GM13976 (cell line): ENCODE measurements at regions of chr20 and their contacts with region 1.

Region 1: DNA sequence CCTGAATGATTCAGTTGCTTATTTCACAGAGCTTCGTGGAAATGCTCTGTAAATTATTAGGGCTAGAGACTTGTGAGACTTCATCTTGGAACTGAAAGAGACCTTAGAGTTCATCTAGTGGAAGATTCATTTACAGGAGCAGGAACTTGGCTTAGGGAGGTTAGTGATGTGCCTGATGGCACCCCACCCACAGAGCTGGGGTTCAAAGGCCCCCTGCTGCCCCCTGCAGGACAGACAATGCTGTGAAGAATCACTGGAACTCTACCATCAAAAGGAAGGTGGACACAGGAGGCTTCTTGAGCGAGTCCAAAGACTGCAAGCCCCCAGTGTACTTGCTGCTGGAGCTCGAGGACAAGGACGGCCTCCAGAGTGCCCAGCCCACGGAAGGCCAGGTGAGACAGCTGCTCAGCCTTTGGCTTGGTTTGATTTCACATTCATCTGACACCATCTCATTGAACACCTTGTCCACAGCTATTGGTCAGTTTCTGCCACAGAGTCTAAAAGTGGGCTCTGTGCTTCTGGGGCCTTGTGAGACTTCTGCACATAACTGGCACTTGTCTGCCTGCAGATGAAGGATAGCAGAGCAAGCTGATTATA is 25.1 kb downstream of the MYBL2 start:
- DNase-seq: peak; percentile 81
- CTCF ChIP-seq: peak; percentile 54

Region 2: DNA sequence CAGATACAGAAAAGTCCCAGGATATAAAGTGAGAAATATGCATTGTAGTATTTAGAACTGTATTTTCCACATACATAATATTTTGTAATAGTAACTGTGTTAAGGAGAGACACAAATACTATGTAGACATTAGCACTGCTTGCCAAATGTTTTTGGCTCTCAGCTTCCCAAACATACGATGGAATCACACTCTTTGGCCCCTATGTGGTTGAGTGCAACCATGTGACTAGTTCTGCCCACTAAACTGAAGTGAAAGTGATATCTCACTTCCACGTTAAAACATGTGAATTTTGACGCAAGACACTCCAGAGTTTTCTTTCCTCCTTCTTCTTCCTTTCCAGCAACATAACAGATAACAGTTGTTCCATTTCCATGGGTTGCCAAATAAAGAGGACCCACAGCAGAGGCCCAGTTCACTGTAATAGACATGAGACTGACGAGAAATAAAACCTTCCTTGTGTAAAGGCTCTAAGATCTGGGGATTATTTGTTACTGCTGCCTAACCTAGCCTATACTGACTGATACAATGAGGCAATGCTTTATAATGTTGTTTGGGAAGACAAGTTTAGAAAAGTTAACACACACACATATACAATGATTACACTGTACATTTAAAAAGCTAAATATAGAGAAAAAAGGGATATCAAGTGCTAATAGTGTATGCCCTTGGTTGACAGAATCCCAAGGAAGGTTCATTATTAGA is 599.5 kb before region 1 on chr20:
- in situ Hi-C with region 1: no loop called
- DNase-seq: no peak
- CTCF ChIP-seq: no peak

Region 3: GRCh38 chr20:43456809-43457639 is 235.0 kb before region 1 on chr20:
- in situ Hi-C with region 1: no loop called
- DNase-seq: peak; percentile 93
- CTCF ChIP-seq: no peak

Region 4: DNA sequence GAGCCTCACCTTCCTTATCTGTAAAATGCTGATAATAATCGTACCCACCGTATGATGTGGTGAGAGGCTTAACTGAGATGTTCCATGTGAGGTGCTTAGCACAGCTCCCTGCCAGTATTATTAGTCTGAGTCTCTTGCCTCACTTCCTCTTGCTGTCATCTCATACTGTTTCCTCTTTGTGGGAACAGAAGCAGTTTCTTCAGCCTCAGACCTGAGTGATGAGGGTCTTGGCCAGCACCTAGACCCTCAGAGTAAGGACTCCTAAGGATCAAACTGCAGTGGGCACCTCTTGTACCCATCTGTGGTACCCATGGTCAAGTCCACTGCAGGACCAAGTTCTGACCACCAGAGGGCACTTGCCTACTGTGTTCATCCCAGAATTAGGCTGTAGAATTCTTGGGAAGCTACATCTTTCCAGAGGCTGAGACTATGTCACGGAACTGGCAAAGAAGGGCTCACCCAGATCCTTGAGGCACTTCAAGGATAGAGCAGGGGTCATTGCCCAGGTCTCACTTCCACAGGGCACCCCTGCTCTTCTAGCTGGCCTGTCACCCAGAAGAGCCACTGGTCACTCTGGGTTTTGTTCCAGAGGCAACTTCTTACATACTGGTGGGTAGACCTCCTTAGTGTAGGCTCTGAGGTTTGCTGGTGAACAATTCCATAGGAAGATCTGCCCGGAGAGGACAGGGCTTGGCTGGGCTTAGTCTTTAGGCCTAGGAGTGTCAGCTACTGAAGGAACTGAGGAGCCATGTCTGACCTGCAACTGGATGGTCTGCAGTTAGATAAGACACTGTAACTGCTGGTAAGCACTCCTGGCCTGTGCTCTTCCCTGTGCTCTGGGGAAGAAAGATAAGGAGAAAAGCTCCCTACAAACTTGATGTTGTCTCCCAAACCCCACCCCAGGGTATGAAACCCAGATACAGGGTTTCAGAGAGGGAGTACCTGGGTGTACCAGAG is 153.8 kb before region 1 on chr20:
- in situ Hi-C with region 1: loop called (anchors 25 kb)
- DNase-seq: peak; percentile 61
- CTCF ChIP-seq: peak; percentile 76

Region 5: GRCh38 chr20:43925801-43926200 is 233.8 kb after region 1 on chr20:
- in situ Hi-C with region 1: no loop called
- DNase-seq: no peak
- CTCF ChIP-seq: peak; percentile 10

Region 6: DNA sequence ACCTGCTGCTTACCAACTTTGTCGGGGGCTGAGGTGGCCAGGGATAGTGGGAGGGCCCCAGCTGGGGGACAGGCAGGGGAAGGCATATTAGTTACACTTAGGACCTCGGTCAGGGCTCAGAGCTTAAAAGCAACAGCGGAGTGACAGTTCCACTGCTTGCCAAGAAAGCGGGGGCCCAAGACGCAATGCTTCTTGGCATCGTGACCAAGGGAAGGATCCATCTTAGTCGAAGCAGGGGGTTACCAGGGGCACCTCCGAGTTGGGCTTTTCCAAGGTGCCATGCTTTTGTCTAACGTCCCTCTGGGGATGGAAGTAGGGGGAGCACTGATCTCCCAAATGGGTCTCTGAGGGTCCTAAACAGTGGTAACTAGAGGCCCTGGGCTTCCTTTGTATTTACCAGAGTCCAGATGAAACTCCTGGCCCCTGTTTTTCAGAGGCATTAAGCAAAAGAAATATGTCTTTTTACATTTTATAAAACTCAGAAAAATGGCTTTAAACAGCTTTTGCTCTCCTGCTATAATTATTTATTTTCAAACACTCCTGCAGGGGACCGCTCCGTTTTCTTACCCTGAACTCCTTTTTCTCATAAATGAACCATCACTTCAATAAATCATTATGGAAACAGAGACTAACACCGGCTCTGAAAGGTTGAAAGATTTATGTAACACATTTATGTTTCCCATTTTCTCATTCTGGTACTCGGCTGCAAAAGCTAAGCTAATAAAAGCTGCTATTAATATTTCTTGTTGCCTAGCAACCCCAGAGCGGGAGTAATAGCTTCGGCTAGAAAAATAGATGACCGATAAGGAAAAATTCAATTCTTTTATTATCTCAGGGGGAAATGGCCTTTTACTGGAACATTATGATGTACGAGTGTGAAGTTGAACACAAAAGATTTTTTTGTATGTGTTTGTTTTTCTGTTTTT is 323.0 kb after region 1 on chr20:
- in situ Hi-C with region 1: no loop called
- DNase-seq: no peak
- CTCF ChIP-seq: no peak